Activated CD4-positive, alpha-beta T cell treated with anti-CD3 and anti-CD28 coated beads for 36 hours (primary cell): ENCODE measurements at regions of chr6 and their contacts with region 1.

Region 1: GRCh38 chr6:107877968-107878367 is 53.9 kb upstream of the SCML4 start:
- DNase-seq: no peak
- ATAC-seq: no peak
- H3K4me3 Mint-ChIP-seq: no peak overlapping the region
- H3K27ac Mint-ChIP-seq: no peak overlapping the region
- H3K4me1 Mint-ChIP-seq: no peaks in the 10 kb centered on the region
- H3K27me3 Mint-ChIP-seq: no peaks in the 10 kb centered on the region

Region 2: GRCh38 chr6:107832151-107833056 is 45.6 kb before region 1 on chr6:
- CTCF ChIA-PET with region 1: no interaction called
- POLR2A ChIA-PET with region 1: interaction called, 10 read pairs
- intact Hi-C with region 1: no loop called
- DNase-seq: no peak
- ATAC-seq: peak; percentile 51
- H3K4me3 Mint-ChIP-seq: no peak overlapping the region
- H3K27ac Mint-ChIP-seq: no peak overlapping the region
- H3K4me1 Mint-ChIP-seq: peaks cover 26% of the 10 kb centered on the region
- H3K27me3 Mint-ChIP-seq: no peaks in the 10 kb centered on the region